OCI-LY7 (cell line): ENCODE measurements at regions of chr16 and their contacts with region 1.

Region 1: DNA sequence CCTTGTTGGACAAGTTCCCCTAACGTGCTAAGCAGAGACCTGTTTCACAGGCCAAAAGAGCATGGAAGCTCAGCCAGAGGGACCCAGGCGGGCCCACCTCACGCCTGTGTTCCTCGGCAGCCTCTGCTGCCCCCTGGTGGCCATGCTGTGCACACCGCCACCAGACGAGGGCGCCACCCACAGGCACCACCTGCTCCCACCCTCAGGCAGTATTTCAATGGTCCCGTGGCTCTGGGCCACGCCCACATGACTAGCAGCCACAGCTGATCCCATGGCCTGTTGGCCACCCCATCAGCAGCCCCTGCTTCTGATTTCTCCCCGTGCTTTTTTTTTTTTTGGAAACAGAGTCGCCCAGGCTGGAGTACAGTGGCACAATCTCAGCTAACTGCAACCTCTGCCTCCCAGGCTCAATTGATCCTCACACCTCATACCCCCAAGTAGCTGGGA is 18.9 kb downstream of the MPG start:
- DNase-seq: peak; percentile 92
- H3K4me3 ChIP-seq: no peak overlapping the region
- H3K27ac ChIP-seq: no peak overlapping the region
- H3K4me1 ChIP-seq: no peaks in the 10 kb centered on the region
- CTCF ChIP-seq: peak; percentile 100

Region 2: GRCh38 chr16:65671-66137 is 31.3 kb before region 1 on chr16:
- CTCF ChIA-PET with region 1: interaction called, 9 read pairs
- POLR2A ChIA-PET with region 1: no interaction called
- intact Hi-C with region 1: loop called (anchors 1 kb)
- DNase-seq: peak; percentile 80
- H3K4me3 ChIP-seq: no peak overlapping the region
- H3K27ac ChIP-seq: no peak overlapping the region
- H3K4me1 ChIP-seq: no peaks in the 10 kb centered on the region
- CTCF ChIP-seq: peak; percentile 95

Region 3: GRCh38 chr16:154223-155030 is 57.5 kb after region 1 on chr16:
- CTCF ChIA-PET with region 1: no interaction called
- POLR2A ChIA-PET with region 1: no interaction called
- intact Hi-C with region 1: no loop called
- DNase-seq: peak; percentile 44
- H3K4me3 ChIP-seq: peak overlapping the region; percentile 61
- H3K27ac ChIP-seq: no peak overlapping the region
- H3K4me1 ChIP-seq: peaks cover 8% of the 10 kb centered on the region
- CTCF ChIP-seq: no peak

Region 4: DNA sequence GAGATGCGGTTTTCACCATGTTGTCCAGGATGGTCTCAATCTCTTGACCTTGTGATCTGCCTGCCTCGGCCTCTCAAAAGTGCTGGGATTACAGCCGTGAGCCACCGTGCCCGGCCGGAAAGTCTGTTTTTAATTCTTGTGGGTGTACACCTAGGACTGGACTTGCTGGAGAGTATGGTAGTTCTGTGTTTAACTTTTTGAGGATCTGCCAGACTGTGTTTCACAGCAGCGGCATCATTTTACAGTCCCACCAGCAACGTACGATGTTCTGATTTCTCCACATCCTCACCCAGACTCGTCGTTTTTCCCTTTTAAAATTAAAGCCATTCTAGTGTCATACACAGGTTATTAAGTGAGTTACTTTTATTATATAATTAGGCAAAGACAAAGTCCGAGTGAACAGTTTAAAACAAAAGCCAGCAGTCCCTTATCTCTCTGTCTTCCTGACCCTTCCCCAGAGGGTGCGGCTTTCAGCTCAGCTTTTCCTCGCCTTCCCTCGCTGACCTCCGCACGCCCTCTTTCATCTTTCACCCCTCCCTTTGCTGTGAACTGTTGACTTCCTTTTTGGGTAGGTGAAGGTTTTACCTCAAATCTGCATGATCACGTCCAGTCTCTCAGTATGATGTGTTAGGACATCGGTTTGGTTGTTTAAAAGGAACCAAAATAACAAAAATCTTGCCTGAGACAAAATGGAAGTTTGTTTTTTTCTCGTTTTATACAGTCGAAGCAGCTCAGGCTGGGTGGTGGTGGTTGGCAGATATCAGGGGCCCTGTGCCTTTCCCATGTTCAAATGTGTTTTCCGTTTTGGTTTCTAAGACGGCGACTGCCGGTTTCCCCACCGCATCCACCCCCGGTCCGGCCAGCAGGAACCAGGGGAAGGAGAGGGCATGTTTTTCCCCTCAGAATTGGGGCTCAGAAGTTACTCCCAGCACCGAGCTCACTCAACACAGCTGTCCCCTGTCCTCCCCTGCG is 155.7 kb after region 1 on chr16:
- CTCF ChIA-PET with region 1: no interaction called
- POLR2A ChIA-PET with region 1: no interaction called
- intact Hi-C with region 1: no loop called
- DNase-seq: no peak
- H3K4me3 ChIP-seq: no peak overlapping the region
- H3K27ac ChIP-seq: no peak overlapping the region
- H3K4me1 ChIP-seq: no peaks in the 10 kb centered on the region
- CTCF ChIP-seq: no peak